ENCODE measurements at regions of chr2 and their contacts with region 1.

Region 1: DNA sequence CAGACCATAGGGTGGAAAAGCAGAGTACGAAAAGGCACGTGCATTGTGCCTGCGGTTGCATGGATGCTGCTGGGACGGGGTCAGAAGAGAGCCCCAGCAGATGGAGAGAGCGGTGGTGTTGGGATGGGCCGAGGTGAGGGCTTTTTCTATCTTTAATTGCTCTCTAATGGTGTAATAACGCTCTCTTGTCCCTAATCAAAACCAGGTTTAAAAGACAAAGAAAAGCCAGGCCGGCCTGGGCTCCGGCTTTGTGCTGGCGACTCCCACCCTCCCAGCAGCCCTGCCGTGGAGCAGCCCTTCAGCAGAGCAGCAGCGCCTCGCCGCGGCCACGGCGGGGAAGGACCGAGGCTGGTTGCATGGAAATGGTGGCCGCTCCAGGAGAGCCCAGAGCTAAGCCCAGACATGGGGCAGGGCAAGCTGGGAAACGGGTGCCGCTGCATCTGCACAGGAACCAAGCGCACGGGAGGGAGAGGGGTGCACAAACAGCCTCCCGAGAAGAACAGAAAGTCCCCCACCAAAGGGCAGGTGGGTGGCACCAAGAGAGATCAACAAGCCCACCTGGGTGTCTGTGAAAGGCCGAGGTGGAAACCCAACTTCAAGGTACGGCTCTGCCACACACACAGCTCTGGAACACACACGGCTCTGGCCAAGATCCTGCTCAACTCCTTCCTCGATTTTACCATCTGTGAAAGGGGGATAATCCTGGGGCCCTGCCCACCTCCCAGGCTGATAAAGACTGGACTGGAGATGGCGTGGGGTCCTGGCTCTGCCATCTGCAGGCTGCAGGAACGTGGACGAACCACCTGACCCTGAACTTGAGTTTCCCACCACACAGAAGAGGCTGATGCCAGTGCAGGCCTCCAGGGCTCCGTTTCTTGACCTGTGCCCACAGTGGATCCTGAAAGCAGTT is 15.0 kb downstream of the HS1BP3 start:
- DNase-seq: no peak
- H3K4me3 ChIP-seq: no peak overlapping the region; the same call in 1 of the 2 replicates
- CTCF ChIP-seq: peak; percentile 99

Region 2: DNA sequence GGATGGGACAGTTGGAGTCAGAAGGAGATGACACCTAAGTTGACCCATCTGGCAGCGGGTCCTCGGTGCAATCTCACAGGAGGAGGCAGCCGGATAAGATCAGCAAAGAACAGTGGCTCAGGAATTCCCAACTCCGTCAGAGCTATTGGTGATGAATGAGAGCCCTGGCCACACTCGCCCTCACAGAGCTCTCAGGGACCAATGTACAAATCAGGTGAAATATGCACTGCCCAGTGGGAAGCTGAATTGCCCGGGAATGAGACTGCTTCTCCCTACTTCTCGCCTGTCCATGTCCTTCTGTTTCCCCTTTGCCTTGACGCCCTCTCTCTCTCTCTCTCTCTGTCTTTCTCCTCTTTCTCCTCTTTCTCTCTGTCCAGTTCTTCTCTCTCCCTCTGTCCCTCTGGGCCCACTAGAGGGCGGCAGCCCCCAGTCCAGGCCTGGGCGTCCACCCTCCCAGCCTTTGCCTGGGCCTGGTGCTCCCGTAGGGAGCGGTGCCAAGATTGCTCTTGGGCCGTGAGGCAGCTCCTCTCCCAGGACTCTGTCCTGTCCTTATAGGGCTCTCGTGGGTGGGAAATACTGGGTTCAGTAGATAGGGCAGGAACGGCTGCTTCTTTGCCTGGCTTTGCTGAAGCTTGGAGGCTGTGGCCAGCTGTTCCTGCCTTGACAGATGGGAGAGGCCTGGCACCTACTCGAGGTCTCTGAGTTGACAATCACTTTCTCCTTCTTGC is 257.0 kb before region 1 on chr2:
- CTCF ChIA-PET with region 1: interaction called, 58 read pairs
- POLR2A ChIA-PET with region 1: no interaction called
- DNase-seq: no peak
- H3K4me3 ChIP-seq: no peak overlapping the region
- CTCF ChIP-seq: peak; percentile 91

Region 3: GRCh38 chr2:20411361-20411894 is 224.5 kb before region 1 on chr2:
- CTCF ChIA-PET with region 1: interaction called, 161 read pairs
- POLR2A ChIA-PET with region 1: no interaction called
- DNase-seq: no peak
- H3K4me3 ChIP-seq: no peak overlapping the region
- CTCF ChIP-seq: peak; percentile 86

Region 4: GRCh38 chr2:20438334-20439192 is 197.4 kb before region 1 on chr2:
- CTCF ChIA-PET with region 1: interaction called, 394 read pairs
- POLR2A ChIA-PET with region 1: interaction called, 5 read pairs
- DNase-seq: peak; percentile 46
- H3K4me3 ChIP-seq: no peak overlapping the region
- CTCF ChIP-seq: no peak

Region 5: DNA sequence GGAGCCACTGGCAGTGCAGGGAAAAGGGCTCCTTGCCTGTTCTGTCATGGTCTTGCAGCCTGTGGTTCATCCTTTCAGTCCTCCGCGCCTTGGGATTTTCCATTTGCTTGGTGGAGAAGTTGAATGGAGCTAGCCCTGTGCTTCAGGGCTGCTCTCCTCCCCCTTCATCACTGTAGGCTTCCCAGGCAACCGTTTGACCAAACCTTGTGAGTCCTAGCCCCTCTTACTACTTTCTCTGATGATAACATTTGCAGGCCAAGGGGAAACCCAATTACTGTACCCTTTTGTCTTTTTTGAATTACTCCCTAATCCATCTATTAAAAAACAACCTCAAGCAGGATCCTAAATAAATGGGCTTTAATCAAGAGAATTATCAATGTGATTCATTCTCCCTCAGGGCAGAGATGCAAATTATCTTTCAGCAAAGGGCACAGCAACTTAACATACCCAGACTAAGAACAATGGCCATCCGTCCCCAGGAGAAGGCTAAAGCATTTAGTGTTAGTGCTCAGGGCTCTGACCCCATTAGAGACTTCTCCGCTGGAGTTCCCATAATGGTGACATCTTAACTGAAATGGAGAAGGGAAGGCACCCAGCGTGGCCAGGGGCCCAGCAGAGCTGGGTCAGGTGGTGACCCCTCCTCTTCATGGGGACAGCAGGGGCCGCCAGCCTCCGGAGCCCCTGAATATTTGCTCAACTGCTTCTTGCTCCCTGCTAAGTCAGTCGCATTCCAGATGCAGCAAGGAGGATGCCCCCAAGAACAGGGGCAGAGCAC is 148.3 kb before region 1 on chr2:
- CTCF ChIA-PET with region 1: no interaction called
- POLR2A ChIA-PET with region 1: no interaction called
- DNase-seq: no peak
- H3K4me3 ChIP-seq: no peak overlapping the region
- CTCF ChIP-seq: no peak

Region 6: GRCh38 chr2:20562540-20563225 is 73.2 kb before region 1 on chr2:
- CTCF ChIA-PET with region 1: no interaction called
- POLR2A ChIA-PET with region 1: no interaction called
- DNase-seq: no peak
- H3K4me3 ChIP-seq: no peak overlapping the region
- CTCF ChIP-seq: no peak

Region 7: DNA sequence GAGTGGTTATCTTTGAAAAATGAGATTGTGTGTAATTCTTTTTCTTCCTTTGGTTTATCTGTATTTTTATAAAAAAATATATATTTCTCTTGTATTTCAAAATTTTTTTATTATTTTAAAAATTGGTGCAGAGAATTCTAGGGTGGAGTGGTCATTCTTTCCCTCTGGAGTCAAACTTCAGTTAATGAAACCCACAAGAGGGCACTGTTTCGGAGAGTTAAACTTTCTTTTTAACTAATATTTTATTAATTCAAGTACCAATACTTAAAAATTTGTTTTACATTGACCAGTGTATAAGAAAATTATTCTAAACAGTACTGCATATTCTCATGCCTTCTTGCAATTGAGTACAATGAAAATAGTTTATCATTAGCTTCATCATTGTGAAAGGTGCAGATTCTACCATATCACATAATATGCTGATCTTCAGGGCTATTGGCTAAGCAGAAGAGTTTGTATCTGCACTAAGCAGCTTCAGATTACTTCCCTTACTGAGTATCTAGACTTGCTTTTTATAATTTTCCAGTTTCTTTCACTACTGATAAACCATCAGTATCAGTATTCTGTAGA is 35.1 kb before region 1 on chr2:
- CTCF ChIA-PET with region 1: interaction called, 18 read pairs
- POLR2A ChIA-PET with region 1: no interaction called
- DNase-seq: no peak
- H3K4me3 ChIP-seq: no peak overlapping the region
- CTCF ChIP-seq: no peak

Region 8: DNA sequence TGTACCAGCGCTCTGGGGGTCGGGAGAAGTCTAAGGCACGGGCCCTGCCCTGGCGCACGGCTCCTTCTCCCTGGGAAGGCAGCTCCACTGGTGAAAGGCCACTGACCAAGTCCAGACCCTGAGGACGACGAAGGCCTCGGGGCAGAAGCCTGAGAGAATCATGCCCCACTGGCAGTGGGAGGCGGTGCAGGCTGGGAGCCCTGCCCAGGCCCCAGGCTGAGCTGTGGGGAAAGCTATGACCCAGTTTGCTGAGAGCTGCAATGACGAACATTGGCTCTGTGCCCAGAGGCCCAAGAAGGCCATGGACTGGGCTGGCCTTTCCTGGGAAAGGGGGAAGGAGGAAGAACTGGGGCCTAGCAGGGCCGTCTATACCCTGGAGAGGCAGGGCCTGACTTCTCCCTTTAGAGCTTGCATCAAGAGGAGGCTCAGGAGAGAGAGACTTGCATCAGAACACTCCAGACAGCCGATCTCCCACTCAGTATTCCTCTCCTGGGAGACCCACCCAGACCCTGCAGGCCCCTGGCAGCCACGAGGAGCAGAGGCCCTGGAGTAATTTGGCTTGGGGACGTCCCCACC is 17.9 kb before region 1 on chr2:
- CTCF ChIA-PET with region 1: interaction called, 25 read pairs
- POLR2A ChIA-PET with region 1: no interaction called
- DNase-seq: peak; percentile 95
- H3K4me3 ChIP-seq: no peak overlapping the region
- CTCF ChIP-seq: peak; percentile 59

Region 9: GRCh38 chr2:20650880-20651730 is 15.2 kb after region 1 on chr2 and contains the start of gene HS1BP3:
- CTCF ChIA-PET with region 1: interaction called, 19 read pairs
- POLR2A ChIA-PET with region 1: no interaction called
- DNase-seq: no peak
- H3K4me3 ChIP-seq: peak within 1 kb of the TSS; percentile 91
- CTCF ChIP-seq: peak; percentile 81